ENCODE measurements at regions of chr12 and their contacts with region 1.

Region 1: GRCh38 chr12:106223485-106224354 is 24.1 kb downstream of the CKAP4 start:
- DNase-seq: peak; percentile 45
- ATAC-seq: peak; percentile 90
- H3K4me3 ChIP-seq: no peak overlapping the region
- H3K27ac ChIP-seq: no peak overlapping the region
- H3K4me1 ChIP-seq: peaks cover 11% of the 10 kb centered on the region
- H3K27me3 ChIP-seq: peaks cover 0 to 4% of the 10 kb centered on the region in 2 experiments; a peak in 1 of 5 replicates
- CTCF ChIP-seq: peak; percentile 93
- EP300 ChIP-seq: no peak
- POLR2A ChIP-seq: no peak
- RAD21 ChIP-seq: peak; percentile 84

Region 2: DNA sequence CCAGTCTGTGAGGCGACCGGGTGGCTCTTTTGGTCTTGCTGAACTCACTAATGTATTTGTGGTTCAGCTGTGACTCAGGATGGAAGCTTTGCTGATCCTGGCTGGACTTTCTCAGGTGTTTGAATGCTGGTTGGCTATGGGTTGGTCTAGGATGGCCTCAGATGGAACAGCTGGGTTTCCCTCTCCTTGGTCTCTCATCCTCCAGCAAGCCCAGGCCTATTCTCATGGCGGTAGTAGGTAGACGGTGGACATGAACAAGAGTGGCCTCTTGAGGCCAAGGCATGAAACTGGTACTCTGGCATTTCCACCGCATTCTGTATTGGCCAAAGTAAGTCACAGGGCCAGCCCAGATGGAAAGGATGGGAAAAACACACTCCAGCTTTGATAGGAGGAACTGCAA is 122.0 kb after region 1 on chr12:
- CTCF ChIA-PET with region 1: interaction called, 24 read pairs
- POLR2A ChIA-PET with region 1: no interaction called
- in situ Hi-C with region 1: loop called (anchors 5 kb)
- intact Hi-C with region 1: loop called (anchors 1 kb)
- DNase-seq: peak; percentile 77
- ATAC-seq: peak; percentile 93
- H3K4me3 ChIP-seq: no peak overlapping the region
- H3K27ac ChIP-seq: no peak overlapping the region
- H3K4me1 ChIP-seq: peaks cover 20% of the 10 kb centered on the region
- H3K27me3 ChIP-seq: peaks cover 0 to 4% of the 10 kb centered on the region in 2 experiments; a peak in 1 of 5 replicates
- CTCF ChIP-seq: peak; percentile 86
- EP300 ChIP-seq: no peak
- POLR2A ChIP-seq: no peak
- RAD21 ChIP-seq: peak; percentile 86

Measured in HepG2 (cell line).